Heart left ventricle (tissue), 16 donors: ENCODE measurements at regions of chr12 and their contacts with region 1.

Region 1: GRCh38 chr12:15979096-15980092 is 68.3 kb downstream of the DERA start:
- DNase-seq: no peak
- ATAC-seq: peak; percentile 47 to 64 (median 58)
- H3K4me3 ChIP-seq: no peak overlapping the region
- H3K27ac ChIP-seq: peak overlapping the region; percentile 1 to 74 (median 52)
- H3K4me1 ChIP-seq: peaks cover 0 to 45% (median 21%) of the 10 kb centered on the region in 12 donors
- H3K27me3 ChIP-seq: no peaks in the 10 kb centered on the region
- CTCF ChIP-seq: peak in 11 of 12 donors; percentile 8 to 52 (median 38)
- POLR2A ChIP-seq: no peak

Region 2: DNA sequence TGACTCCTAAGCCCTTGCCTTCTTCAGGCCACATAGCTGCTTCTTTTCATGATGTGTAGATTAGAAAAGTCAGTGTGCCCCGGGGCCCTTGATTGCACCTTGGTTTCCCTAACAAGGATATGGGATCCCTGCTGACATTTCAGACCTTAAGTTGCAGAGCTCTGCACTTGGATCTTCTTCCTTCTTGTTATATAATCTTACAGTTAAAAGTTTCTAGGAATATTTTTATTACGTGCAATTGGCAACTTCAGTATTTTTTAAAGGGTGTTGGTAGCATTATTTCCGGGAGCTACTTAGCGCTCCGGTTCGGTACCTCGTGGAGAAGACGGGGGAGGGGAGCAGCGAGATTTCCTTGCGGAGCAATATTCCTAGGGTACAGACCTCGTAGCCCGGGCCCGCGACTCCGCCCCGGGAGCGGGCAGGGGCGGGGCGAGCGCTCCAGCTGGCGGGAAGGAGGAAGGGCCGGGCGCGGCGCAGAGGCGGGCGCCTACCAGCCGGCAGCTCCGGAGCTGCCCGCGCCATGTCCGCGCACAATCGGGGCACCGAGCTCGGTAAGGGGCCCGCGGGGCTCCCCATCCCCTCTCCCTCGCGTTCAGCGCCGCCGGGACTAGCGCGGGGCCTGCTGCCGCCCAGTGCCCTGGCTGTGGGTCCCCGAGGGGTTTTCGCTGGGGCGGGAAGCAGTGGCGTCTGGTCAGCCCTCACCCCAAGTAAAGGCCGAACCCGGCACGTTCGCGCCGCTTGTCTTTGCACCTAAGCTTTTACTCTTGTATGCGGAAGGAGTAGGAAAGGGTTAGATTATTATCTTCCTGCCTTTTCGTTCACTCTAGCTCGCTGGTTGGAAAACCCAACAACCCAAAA is 68.3 kb before region 1 on chr12 and contains the start of gene DERA:
- intact Hi-C with region 1: loop called in 1 of 10 experiments (anchors 2 kb)
- DNase-seq: peak; percentile 84 to 93 (median 87)
- ATAC-seq: peak; percentile 94 to 100 (median 99)
- H3K4me3 ChIP-seq: peak within 1 kb of the TSS; percentile 65 to 85 (median 80)
- H3K27ac ChIP-seq: peak within 1 kb of the TSS; percentile 62 to 96 (median 90)
- H3K4me1 ChIP-seq: peaks cover 0 to 22% (median 7%) of the 10 kb centered on the region in 12 donors
- H3K27me3 ChIP-seq: no peaks in the 10 kb centered on the region
- CTCF ChIP-seq: peak in 5 of 12 donors; percentile 10 to 36 (median 15)
- POLR2A ChIP-seq: peak in 1 of 2 donors; percentile 91
- total RNA-seq, gene DERA: 21.4 to 44.3 (median 23.8) TPM

Region 3: GRCh38 chr12:16062611-16063010 is 83.2 kb after region 1 on chr12:
- intact Hi-C with region 1: no loop called
- DNase-seq: no peak
- ATAC-seq: no peak
- H3K4me3 ChIP-seq: no peak overlapping the region
- H3K27ac ChIP-seq: no peak overlapping the region
- H3K4me1 ChIP-seq: no peaks in the 10 kb centered on the region
- H3K27me3 ChIP-seq: no peaks in the 10 kb centered on the region
- CTCF ChIP-seq: no peak
- POLR2A ChIP-seq: no peak

Region 4: GRCh38 chr12:16359512-16360491 is 380.4 kb after region 1 on chr12:
- intact Hi-C with region 1: loop called in 2 of 10 experiments (anchors 10 kb)
- DNase-seq: peak; percentile 20 to 74 (median 42)
- ATAC-seq: peak in 1 of 4 donors; percentile 67
- H3K4me3 ChIP-seq: no peak overlapping the region
- H3K27ac ChIP-seq: no peak overlapping the region
- H3K4me1 ChIP-seq: peaks cover 0 to 7% (median 0%) of the 10 kb centered on the region in 12 donors
- H3K27me3 ChIP-seq: no peaks in the 10 kb centered on the region
- CTCF ChIP-seq: peak in 11 of 12 donors; percentile 19 to 66 (median 56)
- POLR2A ChIP-seq: no peak

Region 5: DNA sequence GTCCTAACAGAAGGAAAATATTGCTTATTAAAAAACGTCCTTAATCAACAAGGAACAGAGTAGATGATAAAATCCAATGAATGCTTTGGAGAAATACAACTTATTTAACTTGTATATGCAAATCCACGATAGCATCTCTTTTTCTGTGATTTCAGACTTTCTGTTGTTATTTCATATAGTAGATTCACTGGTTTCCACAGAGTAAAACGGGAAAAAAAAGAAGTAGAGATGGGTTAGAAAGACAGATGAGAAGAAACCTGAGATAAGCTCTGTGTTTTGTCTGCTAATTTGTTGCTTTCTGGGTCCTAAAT is 1662.9 kb after region 1 on chr12:
- intact Hi-C with region 1: loop called in 1 of 10 experiments (anchors 10 kb)
- DNase-seq: no peak
- ATAC-seq: no peak
- H3K4me3 ChIP-seq: no peak overlapping the region
- H3K27ac ChIP-seq: no peak overlapping the region
- H3K4me1 ChIP-seq: peaks cover 0 to 3% (median 0%) of the 10 kb centered on the region in 12 donors
- H3K27me3 ChIP-seq: peaks cover 0 to 8% (median 0%) of the 10 kb centered on the region in 9 donors
- CTCF ChIP-seq: peak in 1 of 12 donors; percentile 5
- POLR2A ChIP-seq: no peak